Activated CD8-positive, alpha-beta T cell treated with anti-CD3 and anti-CD28 coated beads, Interleukin-2, amount 10 ng/mL, durations not matched to agents 7 days and 5 days (primary cell): ENCODE measurements at regions of chr21 and their contacts with region 1.

Region 1: GRCh38 chr21:37166733-37167132 is 93.7 kb downstream of the TTC3 start:
- DNase-seq: peak; percentile 58
- ATAC-seq: peak; percentile 79
- H3K4me3 Mint-ChIP-seq: no peak overlapping the region
- H3K27ac Mint-ChIP-seq: peak overlapping the region; percentile 69
- H3K4me1 Mint-ChIP-seq: peaks cover 7% of the 10 kb centered on the region
- H3K27me3 Mint-ChIP-seq: no peaks in the 10 kb centered on the region

Region 2: GRCh38 chr21:37145635-37146111 is 21.1 kb before region 1 on chr21:
- CTCF ChIA-PET with region 1: no interaction called
- POLR2A ChIA-PET with region 1: no interaction called
- DNase-seq: no peak
- ATAC-seq: no peak
- H3K4me3 Mint-ChIP-seq: no peak overlapping the region
- H3K27ac Mint-ChIP-seq: no peak overlapping the region
- H3K4me1 Mint-ChIP-seq: peaks cover 10% of the 10 kb centered on the region
- H3K27me3 Mint-ChIP-seq: no peaks in the 10 kb centered on the region

Region 3: DNA sequence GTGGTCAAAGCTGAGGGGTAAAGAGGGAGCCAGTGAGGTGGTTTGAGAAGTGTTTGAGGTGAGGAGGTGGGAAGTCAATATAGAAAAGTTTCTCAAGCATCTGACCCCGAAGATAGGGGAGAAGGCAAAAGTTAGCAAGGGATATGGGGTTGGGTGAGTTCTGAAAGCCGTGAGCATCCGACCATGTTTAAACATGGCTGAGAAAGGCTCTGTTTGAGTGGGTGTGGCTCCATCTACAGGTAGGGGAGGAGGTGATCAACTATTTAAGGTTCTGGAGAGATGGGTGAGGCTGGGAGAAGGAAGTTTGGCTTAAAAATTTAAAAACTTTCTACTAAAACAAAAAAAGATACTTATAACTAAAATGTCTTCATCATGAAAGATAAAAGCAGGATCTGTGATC is 475.8 kb after region 1 on chr21:
- CTCF ChIA-PET with region 1: interaction called, 14 read pairs
- POLR2A ChIA-PET with region 1: no interaction called
- DNase-seq: peak; percentile 39
- ATAC-seq: peak; percentile 60
- H3K4me3 Mint-ChIP-seq: no peak overlapping the region
- H3K27ac Mint-ChIP-seq: no peak overlapping the region
- H3K4me1 Mint-ChIP-seq: peaks cover 3% of the 10 kb centered on the region
- H3K27me3 Mint-ChIP-seq: peaks cover 29% of the 10 kb centered on the region